CD8-positive, alpha-beta T cell (primary cell): ENCODE measurements at regions of chr12 and their contacts with region 1.

Region 1: GRCh38 chr12:113152835-113153814 is 3.6 kb downstream of the CFAP73 start:
- DNase-seq: peak; percentile 24 to 83 (median 61)
- ATAC-seq: peak; percentile 94
- H3K4me3 ChIP-seq: peak overlapping the region; percentile 45 to 55
- H3K4me3 Mint-ChIP-seq: peak overlapping the region; percentile 79
- H3K27ac ChIP-seq: no peak overlapping the region
- H3K27ac Mint-ChIP-seq: no peak overlapping the region
- H3K4me1 ChIP-seq: peaks cover 22% of the 10 kb centered on the region
- H3K4me1 Mint-ChIP-seq: peaks cover 23% of the 10 kb centered on the region
- H3K27me3 ChIP-seq: peaks cover 0 to 17% of the 10 kb centered on the region in 2 experiments
- H3K27me3 Mint-ChIP-seq: peaks cover 4% of the 10 kb centered on the region
- CTCF ChIP-seq: no peak

Region 2: GRCh38 chr12:113103756-113104450 is 49.2 kb before region 1 on chr12:
- CTCF ChIA-PET with region 1: no interaction called
- POLR2A ChIA-PET with region 1: interaction called, 3 read pairs
- intact Hi-C with region 1: loop called in 1 of 2 experiments (anchors 5 kb)
- DNase-seq: peak; percentile 37 to 83 (median 60)
- ATAC-seq: peak; percentile 90
- H3K4me3 ChIP-seq: peak overlapping the region; percentile 43 to 56
- H3K4me3 Mint-ChIP-seq: peak overlapping the region; percentile 84
- H3K27ac ChIP-seq: peak overlapping the region in 1 of 2 experiments; percentile 50
- H3K27ac Mint-ChIP-seq: peak overlapping the region; percentile 79
- H3K4me1 ChIP-seq: no peaks in the 10 kb centered on the region
- H3K4me1 Mint-ChIP-seq: peaks cover 8% of the 10 kb centered on the region
- H3K27me3 ChIP-seq: no peaks in the 10 kb centered on the region
- H3K27me3 Mint-ChIP-seq: no peaks in the 10 kb centered on the region
- CTCF ChIP-seq: no peak

Region 3: DNA sequence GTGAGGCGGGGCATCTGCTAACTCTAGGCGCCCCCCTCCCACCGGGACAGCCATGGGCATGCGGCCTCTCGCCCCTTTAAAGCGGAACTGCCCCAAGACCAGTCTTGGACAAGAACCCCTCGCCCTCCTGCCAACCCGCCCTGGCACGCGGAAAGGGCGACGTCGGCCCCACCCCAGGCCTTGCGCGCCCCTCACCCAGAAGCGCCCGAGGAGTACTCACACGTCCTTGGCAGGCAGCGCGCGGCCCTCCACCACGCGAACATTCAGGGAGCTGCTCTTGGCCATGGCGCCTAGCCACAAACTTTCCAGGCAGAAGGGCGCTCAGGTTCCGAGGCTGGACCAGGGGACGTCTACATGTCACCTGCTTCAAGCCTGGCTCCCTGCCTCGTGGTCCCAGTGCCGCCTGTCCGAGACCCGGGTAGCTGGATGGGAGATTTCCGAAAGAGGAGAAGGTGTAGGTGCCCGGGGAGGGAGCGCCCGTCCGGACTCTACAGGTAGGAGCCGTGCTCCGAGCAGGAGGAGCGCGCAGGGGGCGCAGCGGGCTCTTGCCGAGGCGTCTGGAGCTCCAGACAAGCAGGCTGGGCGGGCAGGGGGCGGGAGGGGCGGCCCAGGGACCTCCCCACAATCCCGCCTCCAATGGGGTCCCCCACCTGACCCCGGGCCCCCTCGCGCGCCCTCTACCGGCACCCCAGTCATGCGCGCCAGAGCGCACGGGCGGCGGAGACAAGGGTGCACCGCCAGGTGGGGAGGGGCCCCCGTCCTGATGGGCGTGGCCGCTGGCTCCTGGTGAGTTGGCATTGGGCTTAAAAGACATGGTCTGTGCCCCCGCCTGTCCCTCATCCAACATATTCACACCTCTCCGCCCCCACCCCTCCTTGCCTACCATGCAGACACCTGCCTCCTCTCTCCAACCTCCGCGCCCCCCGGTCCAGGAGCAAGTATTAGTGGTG is 17.7 kb before region 1 on chr12 and contains the start of gene RASAL1:
- CTCF ChIA-PET with region 1: interaction called, 3 read pairs
- POLR2A ChIA-PET with region 1: no interaction called
- intact Hi-C with region 1: loop called in 1 of 2 experiments (anchors 1 kb)
- DNase-seq: peak; percentile 28 to 84 (median 59)
- ATAC-seq: peak; percentile 91
- H3K4me3 ChIP-seq: peak within 1 kb of the TSS; percentile 22 to 47
- H3K4me3 Mint-ChIP-seq: peak within 1 kb of the TSS; percentile 78
- H3K27ac ChIP-seq: peak within 1 kb of the TSS in 1 of 2 experiments; percentile 36
- H3K27ac Mint-ChIP-seq: peak within 1 kb of the TSS; percentile 92
- H3K4me1 ChIP-seq: peaks cover 12% of the 10 kb centered on the region
- H3K4me1 Mint-ChIP-seq: peaks cover 11% of the 10 kb centered on the region
- H3K27me3 ChIP-seq: no peaks in the 10 kb centered on the region
- H3K27me3 Mint-ChIP-seq: peaks cover 5% of the 10 kb centered on the region
- CTCF ChIP-seq: peak; percentile 54
- total RNA-seq, gene RASAL1: 2.3 to 2.8 TPM